Gastrocnemius medialis (tissue), 4 donors: ENCODE measurements at regions of chr9 and their contacts with region 1.

Region 1: DNA sequence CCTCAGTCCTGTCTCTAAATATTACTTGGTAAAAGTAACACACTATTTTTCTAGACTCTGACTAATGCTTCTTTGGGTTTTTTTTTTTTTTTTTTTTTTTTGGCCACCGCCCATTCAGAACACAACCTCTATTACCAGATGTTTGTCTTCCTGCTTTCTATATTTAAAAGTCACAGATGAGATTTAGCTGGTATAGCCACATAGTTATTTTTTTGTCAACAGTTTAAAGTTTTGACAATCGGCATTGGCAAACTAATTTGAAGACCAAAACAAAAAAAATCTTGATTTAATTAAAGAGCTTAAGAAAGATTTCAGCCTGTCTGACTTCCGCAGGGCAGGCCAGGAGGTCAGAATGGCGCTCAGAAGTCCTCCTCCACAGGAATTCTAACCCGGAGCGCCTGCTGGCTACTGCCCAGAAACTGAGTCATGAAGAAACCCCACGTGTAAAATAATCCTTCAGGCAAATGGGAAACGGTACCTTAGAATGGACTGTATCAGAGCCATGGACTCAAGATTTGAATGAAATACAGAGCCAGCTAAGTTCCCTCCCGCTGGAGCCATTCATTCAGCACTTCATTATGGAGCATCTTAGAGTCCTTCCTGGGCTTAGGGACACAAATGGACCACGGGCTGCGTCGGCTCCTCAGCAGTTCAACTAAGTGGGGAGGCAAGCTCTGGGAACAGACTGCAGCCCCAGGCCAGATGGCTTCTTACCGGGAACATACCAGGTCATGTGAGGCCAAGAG is 55.6 kb downstream of the PTPDC1 start:
- DNase-seq: peak; percentile 69 to 88
- ATAC-seq: peak; percentile 86 to 89
- H3K4me3 ChIP-seq: peak overlapping the region; percentile 23 to 47 (median 34)
- H3K27ac ChIP-seq: peak overlapping the region; percentile 82 to 87 (median 84)
- H3K4me1 ChIP-seq: peaks cover 26 to 46% of the 10 kb centered on the region in 2 donors
- H3K27me3 ChIP-seq: no peaks in the 10 kb centered on the region
- CTCF ChIP-seq: no peak
- POLR2A ChIP-seq: no peak

Region 2: DNA sequence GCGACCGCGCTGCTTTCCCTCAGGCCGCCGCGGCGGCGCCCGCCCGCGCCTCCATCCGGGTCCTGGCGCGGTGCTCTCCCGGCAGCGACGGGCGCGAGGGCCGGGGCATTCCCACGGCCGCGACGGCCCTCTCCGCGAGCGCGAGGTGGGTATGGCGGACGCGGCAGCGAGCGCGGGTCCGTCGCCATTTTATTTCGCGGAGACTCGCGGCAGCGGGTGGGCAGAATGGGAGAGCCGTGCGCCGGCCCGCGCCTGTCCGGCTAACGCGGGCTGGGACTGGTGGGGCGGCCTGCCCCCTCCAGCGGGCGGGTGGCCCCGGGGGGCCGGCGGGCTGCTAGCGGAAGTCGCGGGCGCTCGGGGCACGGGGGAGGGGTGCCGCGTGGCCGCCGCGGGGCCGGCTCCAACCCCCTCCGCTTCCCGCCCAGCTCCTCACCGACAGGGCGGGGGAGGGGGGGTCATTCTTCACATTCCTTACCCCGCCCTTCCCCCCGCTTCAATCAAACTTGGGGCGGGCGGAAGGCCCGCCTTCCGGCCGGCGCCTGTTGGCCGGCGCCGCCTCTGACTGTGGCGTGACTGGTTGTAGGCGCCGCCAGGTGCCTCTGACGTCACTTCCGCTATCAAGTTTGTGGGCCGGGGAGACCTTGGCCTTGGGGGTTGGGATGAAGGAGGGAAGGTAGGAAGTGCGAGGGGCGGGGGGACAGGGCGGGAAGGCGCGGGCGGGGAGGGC is 26.6 kb after region 1 on chr9:
- in situ Hi-C with region 1: no loop called
- intact Hi-C with region 1: loop called (anchors 2 kb)
- DNase-seq: peak; percentile 98 to 99
- ATAC-seq: peak; percentile 79 to 85
- H3K4me3 ChIP-seq: peak overlapping the region; percentile 63 to 93 (median 73)
- H3K27ac ChIP-seq: peak overlapping the region; percentile 95 to 100 (median 99)
- H3K4me1 ChIP-seq: peaks cover 38 to 44% of the 10 kb centered on the region in 2 donors
- H3K27me3 ChIP-seq: no peaks in the 10 kb centered on the region
- CTCF ChIP-seq: peak in 4 of 5 experiments; percentile 32 to 47 (median 42)
- POLR2A ChIP-seq: peak; percentile 99 to 100